ENCODE measurements at regions of chr17 and their contacts with region 1.

Region 1: GRCh38 chr17:82315703-82316358 is 1.6 kb downstream of the CD7 start:
- DNase-seq: no peak
- ATAC-seq: peak; percentile 34

Region 2: DNA sequence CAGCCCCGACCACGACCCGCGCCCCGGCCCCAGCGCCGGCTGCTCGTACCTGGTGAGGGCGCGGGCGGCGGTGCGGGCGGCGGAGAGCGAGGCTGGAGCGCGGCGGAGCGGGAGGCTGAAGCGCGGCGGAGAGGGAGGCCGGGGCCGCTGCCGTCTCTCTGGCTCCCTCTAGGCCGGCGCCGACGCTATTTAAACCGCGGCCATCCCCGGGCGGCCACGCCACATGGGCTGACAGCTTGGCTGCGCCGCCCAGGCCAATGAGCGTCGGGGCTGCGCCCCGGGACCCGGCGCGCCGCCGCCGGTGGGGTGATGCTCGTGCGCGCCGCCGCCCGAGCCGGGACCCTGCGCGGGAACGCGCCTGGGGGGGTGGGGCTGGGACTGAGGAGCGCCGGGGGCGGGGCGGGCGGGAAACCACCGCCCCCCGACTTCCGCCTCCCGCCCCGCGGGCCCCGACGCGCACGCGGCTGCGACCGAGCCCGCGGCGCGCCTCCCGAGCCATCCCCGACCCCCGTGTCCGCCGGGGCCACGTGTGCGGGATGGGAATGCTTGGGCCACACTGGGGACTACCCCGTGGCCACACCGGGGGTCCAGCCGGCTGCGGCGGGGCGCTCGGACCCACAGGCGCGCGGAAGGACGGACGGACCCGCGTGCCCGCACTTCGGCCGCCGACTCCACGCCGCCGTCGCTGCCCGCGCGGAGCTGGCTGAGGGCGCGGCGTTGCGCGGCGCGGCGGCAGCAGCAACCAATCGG is 217.6 kb before region 1 on chr17 and contains the start of gene FASN:
- intact Hi-C with region 1: no loop called
- DNase-seq: peak; percentile 90 to 97
- ATAC-seq: peak; percentile 74
- total RNA-seq, gene FASN: 89.0 to 171 TPM

Region 3: GRCh38 chr17:82257473-82257872 is 58.4 kb before region 1 on chr17:
- intact Hi-C with region 1: loop called in 1 of 2 experiments (anchors 10 kb)
- DNase-seq: peak in 1 of 2 donors; percentile 49
- ATAC-seq: peak; percentile 90